Activated B cell treated with CpG ODN at 0.5 μM for 24 hours (primary cell): ENCODE measurements at regions of chr17 and their contacts with region 1.

Region 1: GRCh38 chr17:72991651-72992050 is 100.8 kb downstream of the SLC39A11 start:
- DNase-seq: no peak
- ATAC-seq: no peak
- H3K4me3 Mint-ChIP-seq: no peak overlapping the region
- H3K27ac Mint-ChIP-seq: no peak overlapping the region
- H3K4me1 Mint-ChIP-seq: peaks cover 11% of the 10 kb centered on the region
- H3K27me3 Mint-ChIP-seq: no peaks in the 10 kb centered on the region
- CTCF ChIP-seq: no peak

Region 2: DNA sequence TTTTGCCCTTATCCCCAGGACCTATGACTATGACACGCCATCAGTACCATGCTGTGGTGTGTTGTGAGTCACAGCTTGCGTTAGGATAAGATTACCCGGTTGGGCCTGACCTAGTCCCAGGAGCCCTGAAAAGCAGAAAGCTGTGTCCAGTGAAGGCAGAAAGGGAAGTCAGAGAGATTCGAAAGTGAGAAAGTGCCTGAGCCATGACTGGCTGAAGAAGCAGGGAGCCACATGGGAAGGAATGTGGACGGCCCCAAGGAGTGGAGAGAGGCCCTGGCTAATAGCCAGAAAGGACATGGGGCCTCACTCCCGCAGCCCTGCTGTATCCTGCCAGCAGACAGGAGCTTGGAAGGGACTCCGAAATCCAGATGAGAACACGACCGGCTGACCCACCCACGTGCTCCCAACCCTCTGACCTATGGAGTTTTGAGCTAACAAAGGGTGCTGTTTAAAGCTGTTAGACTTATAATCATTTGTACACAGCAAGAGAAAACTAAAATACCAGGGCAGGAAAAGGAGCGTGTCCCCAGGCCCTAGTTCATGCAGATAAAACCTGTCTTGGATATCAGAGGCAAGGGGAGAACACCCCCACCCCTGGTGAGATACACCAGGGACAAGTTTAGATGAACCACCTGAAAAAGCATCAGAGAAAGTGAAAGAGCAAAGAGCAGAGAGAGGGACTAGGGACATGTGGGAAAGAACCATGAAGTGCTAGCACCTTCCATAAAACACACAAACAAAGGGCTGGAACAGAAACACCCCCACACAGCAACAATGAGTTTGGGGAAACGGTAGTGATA is 14.5 kb before region 1 on chr17:
- CTCF ChIA-PET with region 1: interaction called, 3 read pairs
- POLR2A ChIA-PET with region 1: no interaction called
- intact Hi-C with region 1: loop called (anchors 2 kb)
- DNase-seq: no peak
- ATAC-seq: peak; percentile 94
- H3K4me3 Mint-ChIP-seq: peak overlapping the region; percentile 2
- H3K27ac Mint-ChIP-seq: peak overlapping the region; percentile 67
- H3K4me1 Mint-ChIP-seq: peaks cover 23% of the 10 kb centered on the region
- H3K27me3 Mint-ChIP-seq: no peaks in the 10 kb centered on the region
- CTCF ChIP-seq: no peak